ENCODE measurements at regions of chr17 and their contacts with region 1.

Region 1: GRCh38 chr17:11023639-11024479 is 186.0 kb upstream of the PIRT start:
- DNase-seq: no peak
- H3K4me3 ChIP-seq: no peak overlapping the region
- H3K27ac ChIP-seq: no peak overlapping the region
- H3K4me1 ChIP-seq: peaks cover 0 to 6% (median 0%) of the 10 kb centered on the region in 4 donors
- H3K27me3 ChIP-seq: no peaks in the 10 kb centered on the region
- CTCF ChIP-seq: no peak
- EP300 ChIP-seq: no peak
- POLR2A ChIP-seq: no peak

Region 2: GRCh38 chr17:11170881-11171280 is 147.0 kb after region 1 on chr17:
- in situ Hi-C with region 1: loop called in 1 of 4 experiments (anchors 25 kb)
- intact Hi-C with region 1: no loop called
- DNase-seq: no peak
- H3K4me3 ChIP-seq: no peak overlapping the region
- H3K27ac ChIP-seq: no peak overlapping the region
- H3K4me1 ChIP-seq: no peaks in the 10 kb centered on the region
- H3K27me3 ChIP-seq: no peaks in the 10 kb centered on the region
- CTCF ChIP-seq: no peak
- EP300 ChIP-seq: no peak
- POLR2A ChIP-seq: no peak

Measured in transverse colon (tissue), 4 donors.